Activated CD4-positive, alpha-beta T cell treated with anti-CD3 and anti-CD28 coated beads, Interleukin-2, amount 10 ng/mL, durations not matched to agents 24 days and 14 days (primary cell): ENCODE measurements at regions of chr1 and their contacts with region 1.

Region 1: DNA sequence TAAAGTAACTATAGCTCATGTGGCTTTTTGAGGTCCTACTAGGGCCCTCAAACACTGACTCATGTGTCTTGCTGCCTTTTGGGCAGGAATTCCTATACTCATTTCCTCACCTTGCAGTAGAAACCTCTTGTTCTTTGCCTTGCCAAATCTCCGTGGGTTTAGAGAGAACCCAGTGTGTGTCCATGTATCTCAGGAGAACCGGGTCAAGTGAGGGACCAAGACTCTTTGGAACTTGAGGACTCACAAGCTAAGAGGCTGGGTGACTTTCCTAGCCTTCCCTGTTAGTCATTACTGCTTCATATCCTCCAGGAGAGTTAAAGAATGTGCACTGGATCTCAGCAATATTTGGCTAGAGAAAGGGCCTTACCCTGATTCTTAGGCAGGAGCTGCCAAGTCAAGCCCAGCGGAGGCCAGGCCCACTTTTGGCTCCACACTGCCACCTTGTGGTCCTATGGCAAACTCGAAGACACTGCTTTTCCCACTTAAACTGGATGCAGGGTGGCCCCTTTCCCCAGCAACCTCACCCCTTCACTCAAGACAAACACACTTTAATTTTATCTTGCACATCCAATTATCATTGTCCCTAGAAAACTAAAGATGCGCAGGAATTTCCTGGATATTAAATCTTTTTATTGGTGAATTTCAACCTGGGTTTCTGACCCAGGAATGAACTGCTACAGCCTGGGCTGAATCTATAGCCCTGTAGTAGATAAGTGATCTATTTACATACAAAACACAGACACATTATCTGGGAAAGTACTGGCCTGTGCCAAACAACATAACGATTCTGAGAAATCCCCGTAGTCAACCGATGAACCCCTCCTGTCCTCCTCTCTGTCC is 10.6 kb downstream of the AVPR1B start:
- DNase-seq: peak; percentile 94
- H3K4me3 Mint-ChIP-seq: no peak overlapping the region
- H3K27ac Mint-ChIP-seq: no peak overlapping the region
- H3K4me1 Mint-ChIP-seq: peaks cover 2% of the 10 kb centered on the region
- H3K27me3 Mint-ChIP-seq: peaks cover 25% of the 10 kb centered on the region

Region 2: DNA sequence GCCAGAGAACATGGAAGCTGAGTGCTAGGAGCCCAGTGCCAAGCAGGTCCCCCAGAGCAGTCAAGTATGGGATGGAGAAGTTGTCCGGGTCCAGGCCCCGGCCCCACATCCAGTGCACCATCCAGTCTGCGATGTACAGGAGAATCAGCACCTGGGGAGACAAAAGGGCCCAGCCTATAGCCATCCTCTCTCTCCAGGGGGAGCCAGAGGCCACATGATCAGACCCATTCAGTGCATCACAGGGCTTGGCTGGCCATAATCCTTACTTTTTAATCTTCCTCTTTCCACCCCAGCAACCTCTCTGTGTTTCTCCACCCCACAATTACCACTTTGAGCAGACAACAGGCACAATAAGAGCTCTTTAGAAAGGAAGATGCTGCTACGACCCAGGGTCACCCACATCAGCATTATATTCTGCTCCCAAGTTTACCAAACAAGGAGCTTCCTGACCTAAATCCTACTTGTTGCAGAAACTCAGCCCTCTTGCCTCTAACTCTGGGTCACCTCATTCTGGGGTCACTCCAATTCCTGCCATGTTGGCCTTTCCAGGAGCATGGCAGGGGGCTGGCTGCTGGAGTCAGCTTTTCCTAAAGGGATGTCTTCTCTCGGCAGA is 314.9 kb before region 1 on chr1:
- intact Hi-C with region 1: loop called (anchors 10 kb)
- DNase-seq: peak; percentile 89
- H3K4me3 Mint-ChIP-seq: no peak overlapping the region
- H3K27ac Mint-ChIP-seq: no peak overlapping the region
- H3K4me1 Mint-ChIP-seq: peaks cover 3% of the 10 kb centered on the region
- H3K27me3 Mint-ChIP-seq: no peaks in the 10 kb centered on the region

Region 3: GRCh38 chr1:205919026-205919746 is 187.4 kb before region 1 on chr1:
- intact Hi-C with region 1: loop called (anchors 1 kb)
- DNase-seq: peak; percentile 91
- H3K4me3 Mint-ChIP-seq: no peak overlapping the region
- H3K27ac Mint-ChIP-seq: no peak overlapping the region
- H3K4me1 Mint-ChIP-seq: no peaks in the 10 kb centered on the region
- H3K27me3 Mint-ChIP-seq: peaks cover 8% of the 10 kb centered on the region

Region 4: GRCh38 chr1:205983925-205984725 is 122.4 kb before region 1 on chr1:
- intact Hi-C with region 1: loop called (anchors 1 kb)
- DNase-seq: peak; percentile 72
- H3K4me3 Mint-ChIP-seq: no peak overlapping the region
- H3K27ac Mint-ChIP-seq: no peak overlapping the region
- H3K4me1 Mint-ChIP-seq: no peaks in the 10 kb centered on the region
- H3K27me3 Mint-ChIP-seq: no peaks in the 10 kb centered on the region

Region 5: GRCh38 chr1:206030714-206031113 is 75.8 kb before region 1 on chr1:
- intact Hi-C with region 1: loop called (anchors 1 kb)
- DNase-seq: peak; percentile 92
- H3K4me3 Mint-ChIP-seq: no peak overlapping the region
- H3K27ac Mint-ChIP-seq: no peak overlapping the region
- H3K4me1 Mint-ChIP-seq: peaks cover 6% of the 10 kb centered on the region
- H3K27me3 Mint-ChIP-seq: peaks cover 61% of the 10 kb centered on the region